HepG2 (cell line): ENCODE measurements at regions of chr17 and their contacts with region 1.

Region 1: DNA sequence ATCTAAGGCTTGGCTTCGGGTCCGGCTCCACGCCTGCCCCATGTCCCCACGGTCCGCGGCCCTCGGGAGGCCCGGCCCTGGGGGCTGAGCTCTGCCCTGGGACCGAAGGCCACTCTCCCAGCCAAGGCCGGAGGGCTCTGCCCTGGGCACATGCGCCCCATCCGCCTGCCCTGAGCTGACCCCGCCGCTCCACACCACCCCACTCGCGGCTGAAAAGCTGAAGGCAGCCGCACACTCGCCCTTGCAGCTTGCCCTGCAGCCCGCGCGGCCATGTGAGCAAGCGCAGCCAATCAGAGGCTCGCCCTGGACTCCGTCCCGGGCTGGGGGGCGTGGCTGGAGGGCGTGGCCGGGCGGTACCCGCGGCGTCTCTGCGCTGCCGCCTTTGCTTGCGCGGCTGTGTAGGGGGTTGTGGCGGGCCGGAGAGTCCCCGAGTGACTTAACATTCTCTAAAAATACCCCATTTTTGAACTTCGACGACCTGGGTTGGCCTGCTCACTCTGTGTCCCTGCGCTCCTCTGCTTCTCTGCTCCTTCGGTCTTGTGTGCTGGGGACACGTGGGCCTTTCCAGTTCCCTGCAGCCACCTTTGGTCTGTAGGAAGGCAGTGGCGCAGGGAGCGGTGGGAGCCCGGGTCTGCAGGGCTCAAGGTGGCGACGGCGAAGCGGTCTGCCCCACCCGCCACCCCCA is 8.8 kb upstream of the MAP2K3 start:
- DNase-seq: peak; percentile 61
- ATAC-seq: peak; percentile 87
- H3K4me3 ChIP-seq: peak overlapping the region; percentile 55 to 81 (median 64); a peak in 5 of 6 replicates
- H3K27ac ChIP-seq: no peak overlapping the region
- H3K4me1 ChIP-seq: peaks cover 48% of the 10 kb centered on the region
- H3K27me3 ChIP-seq: peaks cover 0 to 34% of the 10 kb centered on the region in 2 experiments; a peak in 3 of 5 replicates
- CTCF ChIP-seq: no peak
- EP300 ChIP-seq: no peak
- POLR2A ChIP-seq: peak in 1 of 2 experiments; percentile 85; a peak in 2 of 4 replicates
- RAD21 ChIP-seq: no peak

Region 2: DNA sequence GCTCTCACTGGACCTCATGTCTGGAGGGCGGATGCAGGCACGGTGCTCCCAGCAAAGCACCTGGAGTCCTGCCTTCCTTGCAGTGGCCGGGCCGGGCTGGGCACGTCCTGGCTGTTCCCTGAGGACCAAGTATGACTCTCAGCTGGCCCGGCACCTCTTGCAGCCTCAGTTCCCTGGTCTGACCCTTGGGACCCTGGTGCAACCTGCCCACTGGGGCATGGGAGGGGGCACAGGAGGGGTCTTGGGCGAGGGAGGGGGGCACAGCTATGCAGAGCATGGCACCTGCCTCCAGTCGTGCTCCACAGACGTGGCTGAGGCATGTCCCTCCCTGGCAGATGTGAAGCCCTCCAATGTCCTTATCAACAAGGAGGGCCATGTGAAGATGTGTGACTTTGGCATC is 28.4 kb after region 1 on chr17:
- CTCF ChIA-PET with region 1: no interaction called
- POLR2A ChIA-PET with region 1: no interaction called
- in situ Hi-C with region 1: no loop called
- intact Hi-C with region 1: no loop called
- DNase-seq: no peak
- ATAC-seq: no peak; the same call in 2 of the 3 replicates
- H3K4me3 ChIP-seq: no peak overlapping the region
- H3K27ac ChIP-seq: no peak overlapping the region
- H3K4me1 ChIP-seq: no peaks in the 10 kb centered on the region
- H3K27me3 ChIP-seq: no peaks in the 10 kb centered on the region; a peak in 1 of 5 replicates
- CTCF ChIP-seq: no peak
- EP300 ChIP-seq: no peak
- POLR2A ChIP-seq: peak in 1 of 2 experiments; percentile 43; a peak in 1 of 4 replicates
- RAD21 ChIP-seq: no peak

Region 3: DNA sequence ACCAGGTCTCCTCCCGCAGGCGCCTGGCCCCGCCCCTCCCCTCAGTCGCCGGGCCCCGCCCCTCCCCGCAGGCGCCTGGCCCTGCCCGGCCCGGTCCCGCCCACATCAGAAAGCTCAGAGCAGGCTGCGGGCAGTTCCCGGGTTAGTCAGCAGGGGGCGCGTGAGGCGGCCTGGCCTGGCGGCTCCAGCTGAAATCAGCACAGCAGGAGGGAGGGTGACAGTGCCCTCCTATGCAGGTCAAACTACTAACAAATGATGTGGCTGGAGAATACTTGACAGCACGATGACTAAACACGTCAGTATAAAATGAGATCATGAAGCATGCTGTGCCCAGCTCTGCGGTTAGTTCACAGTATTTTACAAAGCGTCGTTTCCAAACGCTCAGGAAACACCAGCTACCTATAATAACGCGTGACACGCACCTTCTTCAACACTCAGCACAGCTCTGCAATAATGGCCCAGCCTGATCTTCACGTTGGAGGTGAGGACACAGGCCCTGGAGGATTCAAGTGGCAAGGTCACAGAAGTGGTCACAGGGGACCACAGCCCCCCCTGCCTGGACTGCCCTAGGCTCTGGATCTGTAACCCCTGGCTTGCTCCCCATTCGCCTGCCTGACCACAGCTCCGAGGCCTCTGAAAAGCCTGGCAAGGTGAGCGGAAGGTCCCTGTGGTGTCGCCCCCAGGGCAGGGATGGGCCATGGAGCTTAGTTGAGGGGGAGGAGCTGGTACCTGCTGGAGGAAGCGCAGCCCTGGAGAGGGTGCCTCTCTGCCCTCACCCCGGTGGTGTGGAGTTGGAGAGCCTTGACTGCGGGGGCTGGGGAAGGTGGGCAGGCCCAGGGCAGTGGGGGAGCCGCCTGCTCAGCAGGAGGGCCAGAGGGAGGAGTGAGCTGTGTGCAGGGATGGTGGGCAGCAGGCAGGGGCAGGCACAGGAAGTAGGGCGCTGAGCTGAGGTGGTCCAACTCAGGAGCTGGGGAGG is 181.6 kb after region 1 on chr17:
- CTCF ChIA-PET with region 1: no interaction called
- POLR2A ChIA-PET with region 1: no interaction called
- in situ Hi-C with region 1: loop called (anchors 10 kb)
- intact Hi-C with region 1: loop called (anchors 2 kb)
- DNase-seq: peak; percentile 67
- ATAC-seq: peak; percentile 91
- H3K4me3 ChIP-seq: no peak overlapping the region
- H3K27ac ChIP-seq: no peak overlapping the region
- H3K4me1 ChIP-seq: peaks cover 5% of the 10 kb centered on the region; the same call in 1 of the 2 replicates
- H3K27me3 ChIP-seq: peaks cover 1 to 18% of the 10 kb centered on the region in 2 experiments; a peak in 3 of 5 replicates
- CTCF ChIP-seq: peak; percentile 88
- EP300 ChIP-seq: no peak
- POLR2A ChIP-seq: no peak
- RAD21 ChIP-seq: peak; percentile 63